ENCODE measurements at regions of chr11 and their contacts with region 1.

Region 1: DNA sequence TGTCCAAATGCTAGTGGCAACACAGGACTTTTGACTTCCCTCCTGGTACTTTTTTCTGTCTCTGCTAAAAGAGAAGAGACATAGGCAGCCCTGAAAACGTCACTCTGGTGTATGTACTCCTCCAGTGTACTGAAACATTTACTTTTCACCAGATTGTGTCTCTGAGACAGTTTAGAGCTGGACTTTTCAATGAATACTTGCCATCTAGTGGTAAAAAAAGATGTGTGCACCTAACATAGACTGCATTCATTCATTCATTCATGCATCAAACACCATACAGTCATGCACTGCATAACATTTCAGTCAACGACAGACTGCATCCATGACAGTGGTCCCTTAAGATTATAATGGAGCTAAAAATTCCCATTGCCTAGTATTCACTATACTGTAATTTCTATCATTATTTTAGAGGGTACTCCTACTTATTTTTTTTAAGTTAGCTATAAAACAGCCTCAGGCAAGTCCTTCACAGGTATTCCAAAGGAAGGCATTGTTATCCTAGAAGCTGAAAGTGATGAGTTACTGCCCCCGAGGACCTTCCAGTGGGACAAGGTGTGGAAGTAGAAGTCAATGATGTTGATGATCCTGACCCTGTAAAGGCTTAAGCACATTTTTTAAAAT is 186.2 kb downstream of the SPON1 start:
- DNase-seq: peak in 2 of 5 donors; percentile 17 to 48
- H3K4me3 ChIP-seq: no peak overlapping the region
- H3K4me3 Mint-ChIP-seq: no peak overlapping the region
- H3K27ac ChIP-seq: no peak overlapping the region
- H3K27ac Mint-ChIP-seq: peak overlapping the region in 1 of 8 donors; percentile 9
- H3K4me1 ChIP-seq: no peaks in the 10 kb centered on the region
- H3K4me1 Mint-ChIP-seq: peaks cover 0 to 4% (median 3%) of the 10 kb centered on the region in 3 donors
- H3K27me3 ChIP-seq: no peaks in the 10 kb centered on the region
- H3K27me3 Mint-ChIP-seq: peaks cover 1 to 3% of the 10 kb centered on the region in 2 donors

Region 2: GRCh38 chr11:13962562-13963168 is 186.1 kb before region 1 on chr11 and contains the start of gene SPON1:
- CTCF ChIA-PET with region 1: interaction called, 30 read pairs
- POLR2A ChIA-PET with region 1: no interaction called
- DNase-seq: peak in 3 of 5 donors; percentile 16 to 66 (median 34)
- H3K4me3 ChIP-seq: peak within 1 kb of the TSS; percentile 47
- H3K4me3 Mint-ChIP-seq: peak within 1 kb of the TSS; percentile 34 to 84 (median 73)
- H3K27ac ChIP-seq: no peak within 1 kb of the TSS
- H3K27ac Mint-ChIP-seq: no peak within 1 kb of the TSS
- H3K4me1 ChIP-seq: peaks cover 15% of the 10 kb centered on the region
- H3K4me1 Mint-ChIP-seq: peaks cover 8 to 19% (median 13%) of the 10 kb centered on the region in 3 donors
- H3K27me3 ChIP-seq: peaks cover 48% of the 10 kb centered on the region
- H3K27me3 Mint-ChIP-seq: peaks cover 42 to 72% of the 10 kb centered on the region in 2 donors
- total RNA-seq, gene SPON1: 0.81 to 0.97 TPM

Region 3: GRCh38 chr11:14163576-14163975 is 14.8 kb after region 1 on chr11:
- CTCF ChIA-PET with region 1: interaction called, 10 read pairs
- POLR2A ChIA-PET with region 1: no interaction called
- DNase-seq: no peak
- H3K4me3 ChIP-seq: no peak overlapping the region
- H3K4me3 Mint-ChIP-seq: no peak overlapping the region
- H3K27ac ChIP-seq: no peak overlapping the region
- H3K27ac Mint-ChIP-seq: peak overlapping the region in 1 of 8 donors; percentile 68
- H3K4me1 ChIP-seq: no peaks in the 10 kb centered on the region
- H3K4me1 Mint-ChIP-seq: peaks cover 2 to 9% (median 7%) of the 10 kb centered on the region in 3 donors
- H3K27me3 ChIP-seq: no peaks in the 10 kb centered on the region
- H3K27me3 Mint-ChIP-seq: peaks cover 0 to 3% of the 10 kb centered on the region in 2 donors

Region 4: DNA sequence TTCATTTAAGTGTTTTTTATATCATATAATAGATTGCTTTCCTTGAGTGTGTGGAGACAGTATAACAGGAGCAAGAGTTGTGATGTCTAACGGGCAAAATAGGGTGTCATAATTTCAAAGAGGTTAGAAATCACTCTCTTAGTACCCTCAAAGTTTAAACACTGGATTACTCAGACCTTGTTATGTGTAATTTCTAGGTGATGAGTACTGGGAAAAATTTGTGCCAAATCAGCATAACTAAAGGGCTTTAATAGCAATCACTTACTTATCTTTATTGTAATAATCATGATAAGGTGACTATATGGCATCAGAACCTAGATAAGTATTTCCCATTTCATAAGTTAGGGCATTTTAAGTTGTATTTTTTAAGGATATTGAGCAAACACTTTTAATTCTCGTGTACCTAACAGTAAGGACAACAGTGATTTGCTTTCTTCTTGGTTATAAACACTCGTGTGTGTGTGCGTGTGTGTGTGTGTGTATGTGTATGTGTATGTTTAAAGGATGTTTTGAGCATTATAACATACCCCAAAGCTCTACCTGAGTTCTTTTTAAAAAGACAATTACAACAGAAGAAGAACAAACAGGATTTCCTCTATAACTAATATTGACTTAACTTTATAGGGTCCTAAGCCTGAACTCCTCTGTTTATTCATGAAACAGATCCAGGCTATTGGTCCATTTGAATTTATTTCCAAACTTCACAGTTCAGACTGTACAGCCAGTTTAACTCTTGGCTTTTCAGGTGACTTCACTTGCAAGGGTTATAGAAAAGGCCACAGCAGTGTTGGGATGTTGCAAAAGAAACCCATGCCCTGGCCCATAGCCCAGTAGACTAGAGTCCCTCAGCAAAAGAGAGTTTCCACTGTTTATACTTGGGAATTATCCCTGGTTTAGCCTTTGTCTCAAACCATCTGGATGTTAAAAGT is 471.1 kb after region 1 on chr11:
- CTCF ChIA-PET with region 1: no interaction called
- POLR2A ChIA-PET with region 1: no interaction called
- DNase-seq: no peak
- H3K4me3 ChIP-seq: no peak overlapping the region
- H3K4me3 Mint-ChIP-seq: no peak overlapping the region
- H3K27ac ChIP-seq: no peak overlapping the region
- H3K27ac Mint-ChIP-seq: peak overlapping the region in 4 of 8 donors; percentile 23 to 78 (median 45)
- H3K4me1 ChIP-seq: peaks cover 9% of the 10 kb centered on the region
- H3K4me1 Mint-ChIP-seq: peaks cover 29 to 85% (median 46%) of the 10 kb centered on the region in 3 donors
- H3K27me3 ChIP-seq: no peaks in the 10 kb centered on the region
- H3K27me3 Mint-ChIP-seq: no peaks in the 10 kb centered on the region